Left ventricle myocardium inferior (tissue), 1 donor: ENCODE measurements at regions of chr22 and their contacts with region 1.

Region 1: DNA sequence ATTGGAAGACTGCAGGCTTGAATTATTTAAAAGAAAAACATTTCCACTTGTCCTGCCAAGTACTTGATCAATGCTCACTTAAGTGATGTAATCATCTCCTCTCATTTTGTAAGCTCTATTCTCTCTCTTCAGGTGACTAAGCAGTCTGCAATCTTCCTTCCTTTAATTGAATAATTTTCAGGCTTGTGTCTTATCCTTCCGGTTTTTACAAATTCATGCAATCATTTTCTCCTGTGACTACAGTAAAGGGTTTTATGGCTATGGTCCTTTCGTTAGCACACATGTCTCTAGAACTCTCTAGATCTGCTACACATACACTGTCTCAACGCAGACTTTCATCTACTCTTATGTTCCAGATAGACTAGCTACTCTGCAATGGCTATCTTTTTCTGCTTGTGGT is 12.6 kb upstream of the UPB1 start:
- DNase-seq: no peak
- H3K4me3 ChIP-seq: no peak overlapping the region
- H3K27ac ChIP-seq: no peak overlapping the region
- H3K4me1 ChIP-seq: peaks cover 18% of the 10 kb centered on the region
- H3K27me3 ChIP-seq: no peaks in the 10 kb centered on the region
- CTCF ChIP-seq: no peak

Region 2: DNA sequence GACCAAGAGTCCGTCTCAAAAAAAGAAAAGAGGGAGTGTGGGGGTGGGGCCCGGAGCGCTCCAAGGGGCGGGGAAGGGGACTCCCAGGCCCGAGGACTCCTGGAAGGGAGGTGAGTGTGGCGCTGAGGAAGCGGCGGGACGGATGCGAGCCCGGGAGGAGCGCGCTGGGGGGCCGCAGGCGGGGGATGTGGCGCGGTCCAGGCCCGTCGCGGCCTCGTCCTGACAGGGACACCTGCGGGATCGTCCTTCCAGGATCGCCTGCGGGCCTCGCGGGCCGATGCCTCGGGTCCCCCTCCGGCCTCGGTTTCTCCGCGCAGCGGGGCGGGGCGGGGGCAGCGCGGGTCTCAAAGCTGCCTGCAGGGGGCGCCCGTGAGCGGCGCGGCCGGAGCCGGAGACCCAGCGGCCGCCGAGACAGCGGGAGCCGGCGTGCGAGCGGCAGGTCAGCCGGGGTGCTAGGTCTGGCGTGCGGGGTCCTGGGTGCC is 59.0 kb before region 1 on chr22:
- intact Hi-C with region 1: loop called (anchors 10 kb)
- DNase-seq: peak; percentile 71
- H3K4me3 ChIP-seq: peak overlapping the region; percentile 89
- H3K27ac ChIP-seq: peak overlapping the region; percentile 87
- H3K4me1 ChIP-seq: peaks cover 81% of the 10 kb centered on the region
- H3K27me3 ChIP-seq: no peaks in the 10 kb centered on the region
- CTCF ChIP-seq: peak; percentile 97